WTC11 (cell line): ENCODE measurements at regions of chr3 and their contacts with region 1.

Region 1: DNA sequence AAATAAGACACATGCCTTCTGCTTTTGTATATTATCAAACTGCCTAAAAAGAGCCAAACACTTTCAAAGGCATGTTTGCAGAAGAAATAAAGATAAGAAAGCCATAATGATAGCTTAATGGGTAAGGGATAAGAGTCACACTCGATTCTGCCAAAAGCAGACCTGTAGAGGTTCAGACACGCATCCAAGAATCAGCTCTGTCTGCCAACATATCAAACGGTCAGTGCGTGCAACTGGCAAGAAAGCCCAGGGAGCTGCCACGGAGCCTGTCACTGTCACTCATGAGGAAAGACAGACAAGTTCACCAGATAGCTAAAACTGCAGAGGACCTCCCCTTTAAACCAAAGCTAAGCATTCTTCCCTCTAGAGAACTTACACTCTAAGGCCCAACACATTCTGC is 23.2 kb downstream of the DCP1A start:
- DNase-seq: no peak
- ATAC-seq: no peak
- H3K4me3 Mint-ChIP-seq: no peak overlapping the region
- H3K27ac Mint-ChIP-seq: no peak overlapping the region
- H3K4me1 Mint-ChIP-seq: no peaks in the 10 kb centered on the region; the same call in 1 of the 2 replicates
- H3K27me3 Mint-ChIP-seq: no peaks in the 10 kb centered on the region
- CTCF ChIP-seq: no peak

Region 2: DNA sequence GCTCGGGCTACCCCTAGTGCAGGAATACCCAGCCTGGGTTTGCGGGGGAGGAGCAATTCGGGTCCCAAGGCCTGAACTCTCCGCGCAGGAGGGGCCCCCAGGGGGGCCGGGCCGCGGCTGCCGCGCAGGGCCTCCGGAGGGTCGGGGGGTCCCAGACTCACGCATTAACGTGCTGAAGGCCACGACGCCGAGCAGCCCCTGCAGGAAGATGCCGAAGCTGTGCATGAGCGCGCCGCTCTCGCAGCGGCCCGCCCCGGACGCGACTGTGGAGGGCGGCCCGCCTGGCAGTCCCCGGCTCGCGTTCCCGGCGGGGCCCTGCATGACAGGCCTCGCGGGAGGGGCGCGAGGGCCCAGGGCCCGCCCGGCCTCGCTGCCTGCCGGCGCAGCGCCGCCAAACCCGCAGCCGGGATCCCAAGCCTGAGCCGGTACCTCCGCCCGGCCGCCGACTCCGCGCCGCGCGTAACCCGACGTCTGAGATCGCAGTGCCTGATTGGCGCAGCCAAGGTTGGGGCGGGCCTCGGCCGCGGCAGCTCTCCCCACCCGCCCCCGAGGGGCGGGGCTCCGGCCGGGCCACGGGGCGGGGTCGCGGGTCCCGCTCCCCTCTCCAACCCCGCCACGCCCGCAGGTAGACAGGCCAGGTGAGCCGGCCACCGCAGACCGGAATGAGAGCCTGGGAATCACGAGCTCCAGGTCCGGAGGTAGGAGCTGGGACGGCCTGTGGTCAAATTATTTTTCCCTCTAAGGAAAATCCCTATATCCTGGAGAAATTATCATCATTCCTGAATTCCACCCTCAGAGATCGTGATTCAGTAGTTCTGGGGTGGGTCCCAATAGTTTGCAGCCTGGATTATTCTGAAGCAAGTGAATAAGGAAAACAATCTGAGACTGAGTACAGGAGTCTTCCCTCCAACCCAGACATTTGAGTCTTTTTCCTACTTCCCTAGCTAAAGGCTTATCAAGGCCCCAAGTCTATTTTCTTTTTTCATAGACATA is 426.7 kb before region 1 on chr3 and contains the start of gene STIMATE:
- CTCF ChIA-PET with region 1: no interaction called
- POLR2A ChIA-PET with region 1: interaction called, 12 read pairs
- DNase-seq: peak; percentile 92
- ATAC-seq: peak; percentile 94
- H3K4me3 Mint-ChIP-seq: peak within 1 kb of the TSS; percentile 90
- H3K27ac Mint-ChIP-seq: peak within 1 kb of the TSS; percentile 91
- H3K4me1 Mint-ChIP-seq: peaks cover 18% of the 10 kb centered on the region
- H3K27me3 Mint-ChIP-seq: peaks cover 2% of the 10 kb centered on the region; the same call in 1 of the 2 replicates
- CTCF ChIP-seq: no peak
- total RNA-seq, gene STIMATE: 27.1 to 35.5 TPM (median 28.4 TPM) in 3 replicates